ENCODE measurements at regions of chr4 and their contacts with region 1.

Region 1: GRCh38 chr4:147772459-147772969 is 40.6 kb downstream of the ARHGAP10 start:
- DNase-seq: peak in 1 of 2 donors; percentile 65
- H3K4me3 ChIP-seq: no peak overlapping the region
- H3K27ac ChIP-seq: peak overlapping the region in 4 of 5 donors; percentile 14 to 62 (median 54)
- H3K4me1 ChIP-seq: peaks cover 27 to 87% (median 59%) of the 10 kb centered on the region in 4 donors
- H3K27me3 ChIP-seq: no peaks in the 10 kb centered on the region
- CTCF ChIP-seq: no peak
- EP300 ChIP-seq: no peak
- POLR2A ChIP-seq: no peak

Region 2: DNA sequence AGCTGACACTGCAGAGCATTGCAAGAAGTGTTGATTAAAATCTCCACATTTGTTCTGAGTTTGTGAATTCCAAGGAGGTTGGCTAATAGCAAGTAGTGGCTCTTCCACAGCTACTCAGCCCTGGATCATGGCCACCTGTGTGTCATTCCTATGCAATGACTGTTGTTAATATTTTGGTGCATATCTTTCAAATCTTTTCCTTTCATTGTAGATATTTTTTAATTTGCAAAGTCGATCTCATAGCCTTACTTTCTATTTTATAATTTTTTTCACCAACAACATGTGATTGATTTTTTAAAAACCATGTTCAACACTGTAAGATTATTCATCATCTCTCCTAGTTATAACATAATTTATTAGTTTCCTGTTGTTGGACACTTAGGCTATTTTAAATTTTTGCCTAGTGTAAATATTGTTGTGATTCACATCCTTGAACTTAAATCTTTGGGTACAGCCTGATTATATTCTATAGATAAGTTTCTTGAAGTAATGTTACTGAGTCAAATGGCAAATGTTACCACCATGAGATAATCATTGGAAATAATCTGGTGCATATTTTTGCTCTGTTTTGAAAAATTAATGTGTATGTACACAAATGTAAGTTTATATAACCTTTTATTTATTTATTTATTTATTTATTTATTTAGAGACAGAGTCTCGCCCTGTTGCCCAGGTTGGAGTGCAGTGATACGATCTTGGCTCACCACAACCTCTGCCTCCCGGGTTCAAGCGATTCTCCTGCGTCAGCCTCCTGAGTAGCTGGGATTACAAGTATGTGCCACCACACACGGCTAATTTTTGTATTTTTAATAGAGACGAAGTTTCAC is 57.7 kb before region 1 on chr4:
- intact Hi-C with region 1: loop called (anchors 10 kb)
- DNase-seq: no peak
- H3K4me3 ChIP-seq: no peak overlapping the region
- H3K27ac ChIP-seq: no peak overlapping the region
- H3K4me1 ChIP-seq: peaks cover 0 to 11% (median 3%) of the 10 kb centered on the region in 4 donors
- H3K27me3 ChIP-seq: no peaks in the 10 kb centered on the region
- CTCF ChIP-seq: no peak
- EP300 ChIP-seq: no peak
- POLR2A ChIP-seq: no peak

Measured in stomach (tissue), 19 donors.